ENCODE measurements at regions of chr12 and their contacts with region 1.

Region 1: DNA sequence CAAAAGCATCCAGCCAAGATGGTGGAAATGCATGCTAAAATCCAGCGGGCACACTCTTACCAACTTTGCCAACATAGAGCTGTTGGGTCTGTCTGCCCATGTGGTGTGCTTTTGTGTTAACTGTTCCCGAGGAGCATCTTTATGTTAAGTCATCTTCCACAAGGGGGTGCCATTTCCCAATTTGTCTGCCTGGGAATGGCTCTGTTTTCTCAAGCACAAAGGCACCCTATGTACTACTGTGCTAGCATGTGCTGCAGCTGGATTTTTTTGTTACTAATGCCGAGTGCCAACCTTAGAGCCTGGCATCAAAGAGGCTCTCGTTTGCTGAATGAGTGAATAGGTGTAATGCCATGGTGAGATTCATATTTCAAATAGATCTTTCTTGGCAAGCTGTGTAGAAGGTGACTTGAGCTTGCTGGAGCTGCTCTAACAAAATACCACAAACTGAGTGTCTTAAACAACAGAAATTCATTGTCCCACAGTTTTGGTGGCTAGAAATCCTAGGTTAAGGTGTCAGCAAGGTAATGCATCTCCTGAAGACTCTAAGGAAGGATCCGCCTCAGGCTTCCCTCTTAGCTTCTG is 74.3 kb downstream of the TRHDE start:
- DNase-seq: peak; percentile 65 to 75
- H3K4me3 ChIP-seq: no peak overlapping the region
- H3K4me3 Mint-ChIP-seq: no peak overlapping the region
- H3K27ac Mint-ChIP-seq: no peak overlapping the region
- H3K4me1 ChIP-seq: no peaks in the 10 kb centered on the region
- H3K4me1 Mint-ChIP-seq: no peaks in the 10 kb centered on the region
- H3K27me3 ChIP-seq: no peaks in the 10 kb centered on the region; the same call in 1 of the 2 replicates
- H3K27me3 Mint-ChIP-seq: peaks cover under 1% of the 10 kb centered on the region
- CTCF ChIP-seq: peak; percentile 55 to 61

Region 2: DNA sequence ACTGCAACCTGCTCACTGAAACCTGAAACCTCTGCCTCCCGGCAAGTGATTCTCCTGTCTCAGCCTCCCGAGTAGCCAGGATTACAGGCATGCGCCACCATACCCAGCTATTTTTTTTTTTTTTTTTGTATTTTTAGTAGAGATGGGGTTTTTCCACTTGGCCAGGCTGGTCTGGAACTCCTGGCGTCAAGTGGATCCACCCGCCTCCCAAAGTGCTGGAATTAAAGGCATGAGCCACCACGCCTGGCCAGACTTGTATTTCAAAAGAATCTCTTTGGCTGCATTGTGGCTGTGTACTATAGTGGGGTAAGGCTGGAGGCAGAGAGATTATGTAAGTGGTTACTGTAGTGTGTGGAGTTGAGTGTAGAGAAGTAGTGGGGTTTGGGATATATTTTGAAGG is 39.2 kb before region 1 on chr12:
- CTCF ChIA-PET with region 1: no interaction called
- POLR2A ChIA-PET with region 1: no interaction called
- intact Hi-C with region 1: no loop called
- DNase-seq: no peak
- H3K4me3 ChIP-seq: no peak overlapping the region
- H3K4me3 Mint-ChIP-seq: no peak overlapping the region
- H3K27ac Mint-ChIP-seq: no peak overlapping the region
- H3K4me1 ChIP-seq: peaks cover 21% of the 10 kb centered on the region; the same call in 1 of the 2 replicates
- H3K4me1 Mint-ChIP-seq: no peaks in the 10 kb centered on the region
- H3K27me3 ChIP-seq: no peaks in the 10 kb centered on the region
- H3K27me3 Mint-ChIP-seq: no peaks in the 10 kb centered on the region
- CTCF ChIP-seq: no peak

Region 3: GRCh38 chr12:72432037-72432604 is 85.7 kb after region 1 on chr12:
- CTCF ChIA-PET with region 1: no interaction called
- POLR2A ChIA-PET with region 1: no interaction called
- intact Hi-C with region 1: no loop called
- DNase-seq: peak; percentile 4 to 37
- H3K4me3 ChIP-seq: no peak overlapping the region
- H3K4me3 Mint-ChIP-seq: no peak overlapping the region
- H3K27ac Mint-ChIP-seq: no peak overlapping the region
- H3K4me1 ChIP-seq: peaks cover 7% of the 10 kb centered on the region; the same call in 1 of the 2 replicates
- H3K4me1 Mint-ChIP-seq: no peaks in the 10 kb centered on the region
- H3K27me3 ChIP-seq: no peaks in the 10 kb centered on the region
- H3K27me3 Mint-ChIP-seq: no peaks in the 10 kb centered on the region
- CTCF ChIP-seq: no peak

Region 4: DNA sequence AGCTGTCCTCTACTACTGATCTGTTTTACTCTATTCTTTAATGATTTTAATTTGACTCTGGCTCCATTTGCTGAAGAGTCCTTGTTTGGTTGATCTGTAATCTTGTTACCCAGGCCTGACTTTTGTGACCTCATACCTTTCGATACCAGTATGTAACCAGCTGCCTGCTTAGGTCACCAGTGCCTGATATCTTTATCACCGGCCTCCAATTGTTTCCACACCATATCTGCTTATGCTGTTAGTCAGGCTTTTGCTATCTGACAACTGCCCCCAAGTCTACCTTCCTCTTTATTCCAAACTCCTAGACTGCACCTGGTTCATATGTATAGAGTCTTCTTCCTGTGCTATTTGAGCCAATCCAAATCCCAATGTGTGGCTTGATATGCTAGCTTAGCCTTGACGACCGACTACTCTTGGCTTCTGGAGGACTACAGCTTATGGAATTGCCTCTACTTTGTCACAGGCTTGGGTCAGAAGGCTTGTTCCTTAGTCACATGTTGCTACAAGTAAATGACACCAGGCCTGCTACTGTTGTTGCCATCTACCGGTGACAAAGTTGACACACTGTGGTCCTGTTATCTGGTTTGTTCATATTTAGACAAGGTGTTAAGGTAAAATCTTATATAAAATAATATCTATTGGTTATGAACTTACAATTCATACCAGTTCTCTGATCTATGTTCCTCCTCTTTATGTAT is 119.6 kb after region 1 on chr12:
- CTCF ChIA-PET with region 1: interaction called, 3 read pairs
- POLR2A ChIA-PET with region 1: no interaction called
- intact Hi-C with region 1: loop called (anchors 1 kb)
- DNase-seq: peak in 1 of 2 experiments; percentile 16
- H3K4me3 ChIP-seq: no peak overlapping the region
- H3K4me3 Mint-ChIP-seq: no peak overlapping the region
- H3K27ac Mint-ChIP-seq: no peak overlapping the region
- H3K4me1 ChIP-seq: no peaks in the 10 kb centered on the region
- H3K4me1 Mint-ChIP-seq: no peaks in the 10 kb centered on the region
- H3K27me3 ChIP-seq: no peaks in the 10 kb centered on the region; the same call in 1 of the 2 replicates
- H3K27me3 Mint-ChIP-seq: peaks cover 4% of the 10 kb centered on the region
- CTCF ChIP-seq: peak in 1 of 2 experiments; percentile 41

Region 5: DNA sequence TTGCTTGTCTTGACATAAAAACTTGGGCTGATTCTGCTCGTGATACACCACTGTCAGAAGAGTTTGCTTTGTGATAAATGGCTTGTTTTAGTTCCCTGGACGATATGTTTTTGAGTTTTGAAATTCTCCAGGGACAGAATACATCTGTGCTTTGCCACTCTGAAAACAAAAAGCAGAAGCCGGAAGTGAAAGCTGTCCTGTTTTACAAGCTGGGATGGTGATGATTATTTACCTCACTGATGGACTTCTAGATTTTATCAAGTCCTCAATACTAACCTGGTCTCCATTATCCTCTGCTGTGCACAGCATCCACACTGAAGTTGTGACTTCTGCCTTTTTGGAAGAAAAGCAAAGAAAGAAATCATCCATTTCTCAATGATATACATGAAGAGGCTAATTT is 177.3 kb after region 1 on chr12:
- CTCF ChIA-PET with region 1: interaction called, 8 read pairs
- POLR2A ChIA-PET with region 1: no interaction called
- intact Hi-C with region 1: loop called (anchors 1 kb)
- DNase-seq: no peak
- H3K4me3 ChIP-seq: no peak overlapping the region
- H3K4me3 Mint-ChIP-seq: no peak overlapping the region
- H3K27ac Mint-ChIP-seq: no peak overlapping the region
- H3K4me1 ChIP-seq: peaks cover 3% of the 10 kb centered on the region; the same call in 1 of the 2 replicates
- H3K4me1 Mint-ChIP-seq: no peaks in the 10 kb centered on the region
- H3K27me3 ChIP-seq: no peaks in the 10 kb centered on the region; the same call in 1 of the 2 replicates
- H3K27me3 Mint-ChIP-seq: peaks cover 4% of the 10 kb centered on the region
- CTCF ChIP-seq: no peak

Region 6: GRCh38 chr12:72547573-72547972 is 201.1 kb after region 1 on chr12:
- CTCF ChIA-PET with region 1: no interaction called
- POLR2A ChIA-PET with region 1: no interaction called
- intact Hi-C with region 1: loop called (anchors 10 kb)
- DNase-seq: no peak
- H3K4me3 ChIP-seq: no peak overlapping the region
- H3K4me3 Mint-ChIP-seq: no peak overlapping the region
- H3K27ac Mint-ChIP-seq: no peak overlapping the region
- H3K4me1 ChIP-seq: no peaks in the 10 kb centered on the region
- H3K4me1 Mint-ChIP-seq: no peaks in the 10 kb centered on the region
- H3K27me3 ChIP-seq: no peaks in the 10 kb centered on the region
- H3K27me3 Mint-ChIP-seq: peaks cover 9% of the 10 kb centered on the region
- CTCF ChIP-seq: no peak

Measured in Caco-2 (cell line).